ENCODE measurements at regions of chr1 and their contacts with region 1.

Region 1: DNA sequence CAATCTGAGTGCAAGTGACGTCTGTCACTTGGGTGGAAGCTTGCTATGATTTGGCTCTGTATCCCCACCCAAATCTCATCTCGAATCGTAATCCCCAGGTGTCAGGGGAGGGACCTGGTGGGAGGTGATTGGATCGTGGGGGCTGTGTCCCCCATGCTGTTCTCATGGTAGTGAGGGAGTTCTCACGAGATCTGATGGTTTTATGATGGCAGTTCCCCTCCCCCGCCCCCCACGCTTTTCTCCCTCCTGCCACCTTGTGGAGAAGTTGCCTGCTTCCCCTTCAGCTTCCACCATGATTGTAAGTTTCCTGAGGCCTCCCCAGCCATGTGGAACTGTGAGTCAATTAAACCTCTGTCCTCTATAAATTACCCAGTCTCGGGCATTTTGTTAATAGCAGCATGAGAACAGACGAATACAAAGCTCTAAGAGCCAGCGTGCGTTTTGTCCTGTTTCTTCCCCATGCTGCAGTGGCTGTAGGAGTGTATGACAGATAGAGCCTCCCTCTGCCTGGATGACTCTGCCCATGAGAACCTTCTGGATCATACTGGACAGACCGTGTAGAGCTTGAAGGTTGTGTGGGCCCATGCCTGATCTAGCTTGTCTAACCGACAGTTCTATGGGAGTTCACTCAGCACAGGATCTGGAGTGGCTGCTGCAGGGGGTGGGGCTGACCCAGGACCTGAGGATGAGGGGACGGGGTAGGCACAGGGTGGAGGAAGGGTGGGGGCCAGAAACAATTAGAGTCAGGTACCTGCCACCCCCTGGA is 139.7 kb upstream of the ERRFI1 start:
- DNase-seq: no peak
- ATAC-seq: no peak
- H3K4me3 ChIP-seq: no peak overlapping the region
- H3K27ac ChIP-seq: peak overlapping the region; percentile 87
- H3K4me1 ChIP-seq: peaks cover 22% of the 10 kb centered on the region
- H3K27me3 ChIP-seq: no peaks in the 10 kb centered on the region
- CTCF ChIP-seq: no peak

Region 2: GRCh38 chr1:8115769-8116167 is 50.0 kb before region 1 on chr1:
- CTCF ChIA-PET with region 1: interaction called, 15 read pairs
- POLR2A ChIA-PET with region 1: no interaction called
- in situ Hi-C with region 1: no loop called
- intact Hi-C with region 1: no loop called
- DNase-seq: no peak
- ATAC-seq: 0 out of 2 replicates have a peak, but pooled peaks have one; percentile 3
- H3K4me3 ChIP-seq: no peak overlapping the region
- H3K27ac ChIP-seq: peak overlapping the region; percentile 100
- H3K4me1 ChIP-seq: peaks cover 38% of the 10 kb centered on the region
- H3K27me3 ChIP-seq: no peaks in the 10 kb centered on the region
- CTCF ChIP-seq: no peak

Region 3: GRCh38 chr1:8191474-8191873 is 25.7 kb after region 1 on chr1:
- CTCF ChIA-PET with region 1: no interaction called
- POLR2A ChIA-PET with region 1: no interaction called
- in situ Hi-C with region 1: no loop called
- intact Hi-C with region 1: no loop called
- DNase-seq: no peak
- ATAC-seq: no peak
- H3K4me3 ChIP-seq: no peak overlapping the region
- H3K27ac ChIP-seq: peak overlapping the region; percentile 99
- H3K4me1 ChIP-seq: peaks cover 42% of the 10 kb centered on the region
- H3K27me3 ChIP-seq: no peaks in the 10 kb centered on the region
- CTCF ChIP-seq: no peak

Region 4: DNA sequence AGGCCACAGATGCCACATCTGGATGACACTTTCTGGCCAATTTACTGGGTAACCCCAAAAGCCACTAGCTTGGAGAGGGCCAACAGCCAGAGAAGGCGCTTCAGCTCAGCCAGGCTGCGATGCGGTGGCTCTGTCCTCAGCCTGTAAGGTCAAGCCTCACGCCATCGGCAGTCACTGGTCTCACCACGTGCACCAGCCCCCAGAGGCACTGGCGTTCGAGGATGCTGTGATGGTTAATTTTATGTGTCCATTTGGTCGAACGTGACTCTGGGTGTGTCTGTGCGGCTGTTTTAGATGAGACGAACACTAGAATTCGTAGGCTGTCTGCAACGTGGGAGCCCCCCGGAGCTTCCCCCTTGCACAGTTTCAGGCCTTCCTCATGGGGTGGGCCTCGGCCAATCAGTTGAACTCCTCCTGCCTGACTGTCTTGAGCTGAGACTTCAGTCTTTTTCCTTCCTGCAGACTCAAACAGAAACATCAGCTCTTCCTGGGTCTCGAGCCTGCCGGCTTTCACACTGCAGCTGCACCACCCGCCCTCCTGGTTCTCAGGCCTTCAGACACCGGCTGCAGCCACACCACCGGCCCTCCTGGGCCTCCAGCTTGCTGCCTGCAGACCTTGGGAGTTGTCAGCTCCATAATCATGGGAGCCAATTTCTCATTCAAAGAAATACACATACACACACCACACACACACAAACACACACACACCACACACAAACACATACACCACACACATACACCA is 110.6 kb after region 1 on chr1:
- CTCF ChIA-PET with region 1: no interaction called
- POLR2A ChIA-PET with region 1: interaction called, 28 read pairs
- in situ Hi-C with region 1: no loop called
- intact Hi-C with region 1: no loop called
- DNase-seq: no peak
- ATAC-seq: peak; percentile 81
- H3K4me3 ChIP-seq: no peak overlapping the region
- H3K27ac ChIP-seq: peak overlapping the region; percentile 62
- H3K4me1 ChIP-seq: peaks cover 7% of the 10 kb centered on the region
- H3K27me3 ChIP-seq: no peaks in the 10 kb centered on the region
- CTCF ChIP-seq: no peak